ENCODE measurements at regions of chr5 and their contacts with region 1.

Region 1: GRCh38 chr5:113606298-113607134 is 93.0 kb downstream of the YTHDC2 start:
- DNase-seq: peak; percentile 44 to 64
- H3K4me3 ChIP-seq: no peak overlapping the region
- H3K4me3 Mint-ChIP-seq: no peak overlapping the region
- H3K27ac Mint-ChIP-seq: no peak overlapping the region
- H3K4me1 ChIP-seq: no peaks in the 10 kb centered on the region
- H3K4me1 Mint-ChIP-seq: peaks cover 1% of the 10 kb centered on the region
- H3K27me3 ChIP-seq: no peaks in the 10 kb centered on the region
- H3K27me3 Mint-ChIP-seq: peaks cover under 1% of the 10 kb centered on the region
- CTCF ChIP-seq: peak; percentile 70 to 71

Region 2: GRCh38 chr5:113043491-113043931 is 563.0 kb before region 1 on chr5:
- CTCF ChIA-PET with region 1: no interaction called
- POLR2A ChIA-PET with region 1: no interaction called
- intact Hi-C with region 1: loop called (anchors 10 kb)
- DNase-seq: peak in 1 of 2 experiments; percentile 42
- H3K4me3 ChIP-seq: no peak overlapping the region
- H3K4me3 Mint-ChIP-seq: no peak overlapping the region
- H3K27ac Mint-ChIP-seq: no peak overlapping the region
- H3K4me1 ChIP-seq: peaks cover 8% of the 10 kb centered on the region
- H3K4me1 Mint-ChIP-seq: no peaks in the 10 kb centered on the region
- H3K27me3 ChIP-seq: no peaks in the 10 kb centered on the region
- H3K27me3 Mint-ChIP-seq: no peaks in the 10 kb centered on the region
- CTCF ChIP-seq: peak in 1 of 2 experiments; percentile 17

Region 3: DNA sequence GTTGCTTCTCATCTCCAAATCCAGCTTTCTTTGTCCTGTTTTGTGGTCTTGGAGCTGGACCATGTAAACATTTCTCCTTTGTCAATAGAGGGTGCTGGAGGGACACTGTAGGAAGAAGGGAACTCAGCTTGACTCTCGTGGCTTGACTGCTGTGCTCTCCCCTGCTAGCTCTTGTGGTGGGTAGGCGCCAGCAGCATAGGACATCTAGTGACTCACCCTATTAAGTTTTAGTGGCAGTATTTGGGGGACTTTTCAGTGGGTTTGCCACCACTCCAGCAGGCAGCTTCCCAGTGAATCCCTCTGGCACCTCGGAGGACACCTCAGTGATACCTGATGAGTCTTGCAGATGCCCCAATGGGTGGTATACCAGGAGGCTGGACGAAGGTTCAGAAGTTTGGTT is 269.5 kb before region 1 on chr5:
- CTCF ChIA-PET with region 1: no interaction called
- POLR2A ChIA-PET with region 1: no interaction called
- intact Hi-C with region 1: loop called (anchors 1 kb)
- DNase-seq: no peak
- H3K4me3 ChIP-seq: no peak overlapping the region
- H3K4me3 Mint-ChIP-seq: no peak overlapping the region
- H3K27ac Mint-ChIP-seq: no peak overlapping the region
- H3K4me1 ChIP-seq: no peaks in the 10 kb centered on the region
- H3K4me1 Mint-ChIP-seq: no peaks in the 10 kb centered on the region
- H3K27me3 ChIP-seq: no peaks in the 10 kb centered on the region
- H3K27me3 Mint-ChIP-seq: peaks cover 4% of the 10 kb centered on the region
- CTCF ChIP-seq: peak; percentile 26 to 29

Region 4: DNA sequence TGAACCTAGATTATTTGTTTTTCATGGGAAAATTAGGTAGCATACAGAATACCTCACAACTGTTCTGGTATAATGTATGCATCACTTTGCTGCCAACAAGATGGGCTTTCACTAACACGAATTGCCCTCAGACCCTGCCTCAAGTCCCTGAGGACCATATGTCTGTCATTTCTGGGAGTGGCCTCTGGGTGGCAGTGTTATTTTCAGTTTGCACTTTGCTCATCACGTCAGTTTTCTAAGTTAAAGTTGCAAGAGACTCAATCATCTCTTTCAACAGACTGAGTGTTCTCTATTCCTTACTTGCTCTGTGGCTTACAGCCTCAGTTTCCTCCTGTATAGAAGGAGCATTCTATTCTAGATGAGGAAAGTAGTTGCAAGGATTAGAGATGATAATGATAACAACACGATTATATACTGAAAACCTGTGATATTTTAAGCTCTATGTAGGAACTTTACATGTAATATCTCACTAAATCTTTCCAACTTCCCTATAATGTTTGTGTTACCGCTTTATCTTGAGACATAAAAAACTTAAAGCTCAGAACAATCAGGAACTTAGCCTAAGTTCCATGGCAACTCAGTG is 227.5 kb before region 1 on chr5:
- CTCF ChIA-PET with region 1: no interaction called
- POLR2A ChIA-PET with region 1: no interaction called
- intact Hi-C with region 1: loop called (anchors 1 kb)
- DNase-seq: peak; percentile 53 to 60
- H3K4me3 ChIP-seq: no peak overlapping the region
- H3K4me3 Mint-ChIP-seq: no peak overlapping the region
- H3K27ac Mint-ChIP-seq: no peak overlapping the region
- H3K4me1 ChIP-seq: no peaks in the 10 kb centered on the region
- H3K4me1 Mint-ChIP-seq: no peaks in the 10 kb centered on the region
- H3K27me3 ChIP-seq: no peaks in the 10 kb centered on the region
- H3K27me3 Mint-ChIP-seq: peaks cover 16% of the 10 kb centered on the region
- CTCF ChIP-seq: peak; percentile 70 to 76

Region 5: DNA sequence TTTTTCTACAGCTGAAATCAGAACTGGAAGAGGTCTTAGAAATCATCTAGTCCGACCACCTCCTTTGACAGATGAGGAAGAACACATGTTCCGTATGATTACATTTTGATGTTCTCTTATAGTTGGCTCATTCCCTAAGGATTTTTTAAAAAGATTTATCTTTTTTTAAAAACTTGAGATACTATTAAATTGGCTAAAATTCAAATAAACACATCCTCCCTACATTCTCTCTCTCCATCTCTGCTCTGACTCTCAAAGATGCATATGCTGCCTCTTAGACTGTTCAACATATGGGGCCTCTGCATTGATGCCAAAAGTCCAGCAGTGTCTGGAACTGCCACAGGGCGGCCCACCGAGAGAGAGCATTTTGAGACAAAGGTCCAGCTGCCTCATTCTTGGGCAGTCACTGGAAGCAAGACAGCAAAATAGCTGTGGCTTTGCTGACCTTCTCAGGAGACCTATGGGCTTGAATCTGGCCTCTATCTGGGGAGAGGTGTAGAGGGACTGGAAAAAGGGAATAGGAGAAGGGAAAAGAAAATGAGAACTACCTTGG is 158.9 kb before region 1 on chr5:
- CTCF ChIA-PET with region 1: no interaction called
- POLR2A ChIA-PET with region 1: no interaction called
- intact Hi-C with region 1: loop called (anchors 1 kb)
- DNase-seq: peak in 1 of 2 experiments; percentile 51
- H3K4me3 ChIP-seq: no peak overlapping the region
- H3K4me3 Mint-ChIP-seq: no peak overlapping the region
- H3K27ac Mint-ChIP-seq: no peak overlapping the region
- H3K4me1 ChIP-seq: no peaks in the 10 kb centered on the region
- H3K4me1 Mint-ChIP-seq: no peaks in the 10 kb centered on the region
- H3K27me3 ChIP-seq: no peaks in the 10 kb centered on the region
- H3K27me3 Mint-ChIP-seq: peaks cover 16% of the 10 kb centered on the region
- CTCF ChIP-seq: peak; percentile 8 to 54

Region 6: GRCh38 chr5:113574417-113574816 is 32.1 kb before region 1 on chr5:
- CTCF ChIA-PET with region 1: no interaction called
- POLR2A ChIA-PET with region 1: no interaction called
- intact Hi-C with region 1: no loop called
- DNase-seq: no peak
- H3K4me3 ChIP-seq: no peak overlapping the region
- H3K4me3 Mint-ChIP-seq: no peak overlapping the region
- H3K27ac Mint-ChIP-seq: no peak overlapping the region
- H3K4me1 ChIP-seq: no peaks in the 10 kb centered on the region
- H3K4me1 Mint-ChIP-seq: no peaks in the 10 kb centered on the region
- H3K27me3 ChIP-seq: no peaks in the 10 kb centered on the region
- H3K27me3 Mint-ChIP-seq: no peaks in the 10 kb centered on the region
- CTCF ChIP-seq: no peak